Head of caudate nucleus (tissue), 42 donors: ENCODE measurements at regions of chr1 and their contacts with region 1.

Region 1: GRCh38 chr1:48109390-48110013 is 112.3 kb upstream of the TRABD2B start:
- DNase-seq: peak in 17 of 42 donors; percentile 15 to 77 (median 49)

Region 2: GRCh38 chr1:48164571-48164970 is 55.1 kb after region 1 on chr1:
- intact Hi-C with region 1: no loop called
- DNase-seq: no peak

Region 3: DNA sequence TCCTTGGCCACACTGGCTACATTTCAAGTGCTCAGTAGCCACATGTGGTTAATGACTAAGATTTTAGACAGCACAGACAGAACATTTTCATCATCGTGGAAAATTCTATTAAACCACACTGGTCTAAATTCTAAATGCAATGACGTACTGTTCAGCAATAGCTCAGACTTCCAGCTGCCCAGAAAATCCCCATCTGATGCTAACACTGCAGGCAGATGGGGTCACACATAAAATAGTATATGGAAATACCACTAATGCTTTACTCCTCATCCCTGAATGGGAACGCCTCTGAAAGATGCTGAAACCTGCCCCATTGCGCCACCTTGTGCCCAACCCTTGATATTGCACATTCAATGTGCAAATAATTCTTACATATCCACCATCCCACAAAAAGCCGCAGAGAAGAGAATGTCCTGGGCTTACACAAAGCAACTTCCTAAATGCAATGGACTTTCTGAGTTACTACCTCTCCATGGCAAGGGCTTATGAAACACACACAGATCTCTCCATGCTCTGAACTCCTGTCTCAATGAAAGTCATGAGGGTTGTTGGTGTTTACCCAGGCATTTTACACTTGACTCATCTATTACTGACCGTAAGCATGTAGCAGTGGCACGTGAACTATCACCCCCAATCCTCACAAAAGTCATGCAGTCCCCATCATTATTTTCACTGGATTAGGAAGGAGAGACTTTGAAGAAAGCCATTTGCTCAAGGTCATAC is 92.7 kb after region 1 on chr1:
- intact Hi-C with region 1: loop called (anchors 5 kb)
- DNase-seq: peak; percentile 51 to 92 (median 80)